Right ventricle myocardium superior (tissue), 1 donor: ENCODE measurements at regions of chr15 and their contacts with region 1.

Region 1: GRCh38 chr15:27454281-27455075 is 483.5 kb downstream of the GABRG3 start:
- DNase-seq: no peak
- ATAC-seq: no peak

Region 2: GRCh38 chr15:27399241-27399640 is 55.2 kb before region 1 on chr15:
- intact Hi-C with region 1: loop called (anchors 10 kb)
- DNase-seq: no peak
- ATAC-seq: no peak

Region 3: DNA sequence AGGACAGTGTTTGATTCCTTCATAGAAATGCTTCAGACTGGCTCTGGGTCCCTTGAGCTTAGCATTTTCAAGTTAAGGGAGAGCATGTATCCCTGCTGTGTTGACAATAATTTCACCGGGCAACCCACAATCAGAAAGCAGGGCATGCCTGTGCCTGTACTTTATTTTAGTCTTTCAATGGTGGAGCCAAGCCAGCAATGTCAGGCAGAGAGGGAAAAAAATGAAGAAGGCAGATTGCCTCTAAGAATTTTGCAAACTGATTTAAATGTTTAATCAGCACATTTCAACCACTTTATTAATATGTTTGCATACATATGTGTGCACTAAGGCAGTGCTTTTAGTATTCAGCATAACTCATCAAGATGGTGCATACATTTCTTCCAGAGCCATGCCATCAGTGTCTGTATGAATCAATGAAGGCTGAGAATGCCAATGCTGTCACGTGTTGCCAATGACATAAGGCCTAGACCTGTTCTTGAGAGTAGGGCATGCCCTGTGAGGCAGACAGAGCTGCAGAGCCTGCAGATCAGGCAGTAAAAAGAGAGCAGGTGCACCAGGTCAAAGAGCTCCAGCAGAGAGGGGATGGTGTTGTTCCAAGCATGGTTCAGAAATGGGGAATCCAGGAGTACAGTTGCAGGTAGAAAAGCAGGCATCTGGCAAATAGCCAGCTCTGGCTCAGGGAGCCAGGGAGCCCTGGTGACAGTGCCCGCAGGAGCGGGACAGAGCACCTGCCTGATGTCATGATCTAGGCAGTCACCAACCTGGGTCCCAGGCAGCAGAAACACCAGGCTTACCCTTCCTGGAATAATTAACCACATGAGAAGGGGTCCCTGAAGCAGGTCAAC is 25.0 kb after region 1 on chr15:
- intact Hi-C with region 1: no loop called
- DNase-seq: no peak
- ATAC-seq: peak; percentile 98